ENCODE measurements at regions of chr10 and their contacts with region 1.

Region 1: GRCh38 chr10:24866604-24867583 is 85.5 kb downstream of the PRTFDC1 start:
- DNase-seq: peak; percentile 67
- H3K4me3 Mint-ChIP-seq: peak overlapping the region; percentile 60
- H3K27ac Mint-ChIP-seq: no peak overlapping the region
- H3K4me1 Mint-ChIP-seq: peaks cover 35% of the 10 kb centered on the region
- H3K27me3 Mint-ChIP-seq: no peaks in the 10 kb centered on the region

Region 2: GRCh38 chr10:24814568-24815313 is 52.2 kb before region 1 on chr10:
- intact Hi-C with region 1: no loop called
- DNase-seq: no peak
- H3K4me3 Mint-ChIP-seq: no peak overlapping the region
- H3K27ac Mint-ChIP-seq: no peak overlapping the region
- H3K4me1 Mint-ChIP-seq: peaks cover 5% of the 10 kb centered on the region
- H3K27me3 Mint-ChIP-seq: no peaks in the 10 kb centered on the region

Region 3: DNA sequence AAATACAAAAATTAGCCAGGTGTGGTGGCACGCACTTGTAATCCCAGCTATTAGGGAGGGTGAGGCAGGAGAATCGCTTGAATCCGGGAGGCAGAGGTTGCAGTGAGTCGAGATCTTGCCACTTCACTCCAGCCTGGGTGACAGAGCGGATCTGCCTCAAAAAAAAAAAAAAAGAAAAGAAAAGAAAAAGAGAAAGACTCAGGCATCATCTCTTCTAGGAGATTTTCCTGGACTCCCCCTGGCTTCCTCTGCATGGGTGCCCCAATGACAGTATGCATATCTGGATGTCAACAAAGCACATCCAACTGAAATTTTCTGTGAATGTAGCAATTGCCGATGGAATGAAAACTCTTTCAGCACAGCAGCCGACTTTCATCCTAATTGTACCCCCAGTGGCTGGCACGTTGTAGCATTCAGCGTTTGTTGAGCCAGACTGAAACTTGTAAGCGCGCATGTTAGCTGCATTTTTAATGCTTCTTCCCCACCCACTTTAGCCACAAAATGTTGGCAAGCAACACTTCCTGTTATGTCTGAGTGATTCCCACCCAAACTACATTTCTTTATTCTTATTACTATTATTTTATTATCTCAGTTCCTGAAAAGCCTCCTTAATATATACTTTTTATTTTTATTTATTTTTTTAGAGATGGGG is 15.3 kb after region 1 on chr10:
- intact Hi-C with region 1: loop called (anchors 2 kb)
- DNase-seq: peak; percentile 74
- H3K4me3 Mint-ChIP-seq: peak overlapping the region; percentile 62
- H3K27ac Mint-ChIP-seq: no peak overlapping the region
- H3K4me1 Mint-ChIP-seq: peaks cover 21% of the 10 kb centered on the region
- H3K27me3 Mint-ChIP-seq: no peaks in the 10 kb centered on the region

Region 4: GRCh38 chr10:25059764-25060389 is 193.0 kb after region 1 on chr10:
- intact Hi-C with region 1: loop called (anchors 5 kb)
- DNase-seq: no peak
- H3K4me3 Mint-ChIP-seq: no peak overlapping the region
- H3K27ac Mint-ChIP-seq: no peak overlapping the region
- H3K4me1 Mint-ChIP-seq: peaks cover 22% of the 10 kb centered on the region
- H3K27me3 Mint-ChIP-seq: peaks cover 3% of the 10 kb centered on the region

Region 5: DNA sequence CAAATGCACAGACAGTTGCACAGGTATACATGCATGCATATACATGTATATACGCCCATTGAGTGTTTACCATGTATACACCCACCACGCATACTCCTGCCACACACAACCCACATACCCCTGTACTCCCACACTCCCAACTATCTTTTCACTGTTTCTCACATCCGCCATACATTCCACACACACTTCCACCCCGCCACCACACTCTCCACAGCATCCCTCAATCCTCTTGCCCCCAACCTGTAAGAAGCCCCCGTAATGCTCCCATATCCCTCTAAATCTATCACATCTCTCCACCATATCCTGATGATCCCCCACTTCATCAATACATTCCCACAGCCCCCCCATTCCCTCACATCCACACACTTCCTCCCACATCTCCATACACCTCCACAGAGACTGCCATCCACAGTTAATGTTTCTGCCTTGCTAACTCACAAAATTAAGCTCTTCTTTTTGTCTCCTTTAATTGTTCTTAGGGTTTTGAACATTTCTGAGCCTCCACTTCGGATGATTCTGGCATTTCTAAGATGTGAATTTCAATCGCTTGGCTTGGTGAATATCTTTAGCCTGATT is 355.3 kb after region 1 on chr10:
- intact Hi-C with region 1: no loop called
- DNase-seq: no peak
- H3K4me3 Mint-ChIP-seq: no peak overlapping the region
- H3K27ac Mint-ChIP-seq: no peak overlapping the region
- H3K4me1 Mint-ChIP-seq: no peaks in the 10 kb centered on the region
- H3K27me3 Mint-ChIP-seq: no peaks in the 10 kb centered on the region

Measured in activated CD4-positive, alpha-beta T cell treated with anti-CD3 and anti-CD28 coated beads, Interleukin-2, amount 10 ng/mL, durations not matched to agents 24 days and 14 days (primary cell).